CD8-positive, alpha-beta T cell (primary cell): ENCODE measurements at regions of chr7 and their contacts with region 1.

Region 1: DNA sequence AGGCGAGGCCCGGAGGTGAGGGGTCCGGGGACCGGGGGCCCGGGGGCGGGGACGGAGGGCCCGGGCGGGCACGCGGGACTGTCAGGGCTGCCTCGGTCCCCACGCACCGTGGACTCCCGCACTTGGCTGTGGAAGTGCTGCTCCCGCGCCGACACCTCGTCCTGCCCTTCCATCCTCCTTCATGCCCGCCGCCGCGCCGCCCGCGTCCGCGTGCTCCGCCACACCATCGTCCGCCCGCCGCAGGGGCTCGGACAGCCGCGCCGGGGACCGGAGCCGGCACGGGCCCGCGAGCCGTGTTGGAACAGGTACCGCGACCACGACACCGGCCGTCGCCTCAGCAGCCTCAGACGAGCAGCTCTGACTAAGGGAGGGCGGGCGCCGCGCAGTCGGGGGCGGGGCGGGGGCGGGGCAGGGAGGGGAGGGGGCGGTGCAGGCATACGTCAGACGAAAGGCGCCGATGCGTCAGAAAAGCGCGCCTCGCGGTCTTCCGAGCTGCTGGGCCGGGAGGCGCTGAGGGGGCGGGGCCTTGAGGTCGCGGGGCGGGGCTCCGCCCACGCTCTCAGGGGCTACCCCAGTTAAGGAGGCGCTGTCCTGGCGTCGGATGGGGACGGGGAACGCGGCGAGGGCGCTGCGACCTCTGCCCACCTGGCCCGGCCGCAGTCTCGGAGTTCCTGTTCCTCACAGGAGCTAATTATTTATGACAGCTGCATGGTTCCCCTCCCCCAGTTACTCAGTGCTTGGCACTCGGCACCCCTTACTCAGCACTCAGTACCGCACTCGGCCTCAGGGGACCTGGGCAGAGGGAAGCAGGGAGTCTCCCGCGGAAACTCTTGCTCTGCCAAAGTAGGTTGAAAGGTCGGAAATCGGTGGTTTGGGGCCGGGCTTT is at the start of gene LMBR1:
- DNase-seq: peak; percentile 89 to 97 (median 95)
- ATAC-seq: peak; percentile 79
- H3K4me3 ChIP-seq: peak within 1 kb of the TSS; percentile 81 to 91
- H3K4me3 Mint-ChIP-seq: peak within 1 kb of the TSS; percentile 91
- H3K27ac ChIP-seq: peak within 1 kb of the TSS; percentile 84 to 87
- H3K27ac Mint-ChIP-seq: peak within 1 kb of the TSS; percentile 92
- H3K4me1 ChIP-seq: peaks cover 18% of the 10 kb centered on the region
- H3K4me1 Mint-ChIP-seq: peaks cover 48% of the 10 kb centered on the region
- H3K27me3 ChIP-seq: no peaks in the 10 kb centered on the region
- H3K27me3 Mint-ChIP-seq: no peaks in the 10 kb centered on the region
- CTCF ChIP-seq: peak; percentile 60
- total RNA-seq, gene LMBR1: 69.1 to 74.0 TPM

Region 2: DNA sequence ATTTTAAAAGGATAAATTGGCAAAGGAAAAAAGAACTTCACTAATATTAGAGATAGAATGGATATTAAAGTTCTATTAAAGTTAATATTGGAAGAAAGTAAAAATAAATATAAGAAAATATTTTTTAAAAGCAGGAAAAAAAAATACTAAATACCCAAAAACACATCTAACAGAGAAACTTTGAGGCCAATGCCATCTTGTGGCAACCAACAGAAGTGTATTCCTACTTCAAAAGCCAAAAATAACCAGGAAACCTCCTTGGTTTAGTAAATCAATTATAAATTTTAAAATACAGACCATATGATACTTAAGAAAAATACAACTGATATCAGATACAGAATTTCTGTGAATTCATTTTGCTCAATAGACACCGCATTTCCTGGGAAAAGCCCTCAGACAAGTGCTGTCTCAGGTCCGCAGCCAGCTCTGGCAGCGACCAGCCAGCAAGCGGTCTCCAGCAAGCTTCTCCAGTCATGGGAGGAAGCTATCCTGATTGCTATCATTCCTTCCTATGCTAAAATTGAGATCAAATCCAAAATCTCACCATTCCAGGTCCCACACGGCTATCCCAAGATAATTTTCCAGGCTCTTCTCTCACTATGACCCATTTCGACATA is 65.4 kb before region 1 on chr7:
- CTCF ChIA-PET with region 1: no interaction called
- POLR2A ChIA-PET with region 1: no interaction called
- intact Hi-C with region 1: loop called (anchors 5 kb)
- DNase-seq: peak in 2 of 9 experiments; percentile 20 to 37
- ATAC-seq: no peak
- H3K4me3 ChIP-seq: no peak overlapping the region
- H3K4me3 Mint-ChIP-seq: no peak overlapping the region
- H3K27ac ChIP-seq: no peak overlapping the region
- H3K27ac Mint-ChIP-seq: no peak overlapping the region
- H3K4me1 ChIP-seq: no peaks in the 10 kb centered on the region
- H3K4me1 Mint-ChIP-seq: no peaks in the 10 kb centered on the region
- H3K27me3 ChIP-seq: no peaks in the 10 kb centered on the region
- H3K27me3 Mint-ChIP-seq: no peaks in the 10 kb centered on the region
- CTCF ChIP-seq: peak; percentile 68

Region 3: DNA sequence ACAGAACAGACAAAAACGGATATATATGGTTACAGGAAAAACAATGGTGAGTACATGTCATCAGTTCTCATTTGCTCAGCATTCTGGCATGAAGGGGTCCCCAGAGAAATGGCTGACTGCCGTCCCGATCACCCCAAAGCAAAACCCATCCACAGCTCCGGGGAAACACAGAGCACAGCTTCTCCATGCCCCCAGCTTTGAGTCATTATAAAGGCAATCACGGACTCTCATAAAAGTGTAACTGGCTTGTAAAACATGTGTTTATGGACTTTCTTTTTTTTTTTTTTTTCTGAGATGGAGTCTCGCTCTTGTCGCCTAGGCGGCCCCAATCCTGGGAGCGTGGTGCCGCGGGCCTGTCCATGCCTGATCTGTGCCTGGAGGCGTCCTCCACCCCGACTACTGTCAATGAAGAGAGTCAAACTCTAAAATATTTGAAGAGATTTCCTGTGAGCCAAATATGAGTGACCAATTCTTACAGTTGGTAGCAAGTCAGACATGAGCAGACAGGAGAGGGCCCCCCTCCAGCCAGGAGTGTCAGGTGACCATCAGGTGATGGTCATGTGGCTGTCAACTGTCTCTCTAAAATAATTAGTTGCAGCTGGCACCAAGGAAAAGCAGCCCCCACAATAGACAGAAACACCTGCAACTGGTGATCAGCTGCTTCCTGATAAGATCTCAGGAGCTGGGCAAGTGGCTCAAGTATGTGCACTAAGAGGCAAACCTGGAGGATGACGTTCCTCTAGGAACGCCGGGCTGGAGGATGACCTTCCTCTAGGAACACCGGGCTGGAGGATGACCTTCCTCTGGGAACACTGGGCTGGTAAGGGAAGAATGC is 34.7 kb after region 1 on chr7:
- CTCF ChIA-PET with region 1: no interaction called
- POLR2A ChIA-PET with region 1: interaction called, 4 read pairs
- intact Hi-C with region 1: loop called (anchors 1 kb)
- DNase-seq: no peak
- ATAC-seq: no peak
- H3K4me3 ChIP-seq: no peak overlapping the region
- H3K4me3 Mint-ChIP-seq: no peak overlapping the region
- H3K27ac ChIP-seq: no peak overlapping the region
- H3K27ac Mint-ChIP-seq: peak overlapping the region; percentile 23
- H3K4me1 ChIP-seq: peaks cover 17% of the 10 kb centered on the region
- H3K4me1 Mint-ChIP-seq: peaks cover 33% of the 10 kb centered on the region
- H3K27me3 ChIP-seq: no peaks in the 10 kb centered on the region
- H3K27me3 Mint-ChIP-seq: peaks cover 4% of the 10 kb centered on the region
- CTCF ChIP-seq: no peak

Region 4: GRCh38 chr7:157138424-157139110 is 245.5 kb after region 1 on chr7 and contains the start of gene UBE3C:
- CTCF ChIA-PET with region 1: no interaction called
- POLR2A ChIA-PET with region 1: interaction called, 4 read pairs
- intact Hi-C with region 1: loop called (anchors 1 to 2 kb)
- DNase-seq: peak; percentile 81 to 97 (median 89)
- ATAC-seq: peak; percentile 85
- H3K4me3 ChIP-seq: peak within 1 kb of the TSS; percentile 57 to 59
- H3K4me3 Mint-ChIP-seq: peak within 1 kb of the TSS; percentile 84
- H3K27ac ChIP-seq: peak within 1 kb of the TSS; percentile 76 to 88
- H3K27ac Mint-ChIP-seq: peak within 1 kb of the TSS; percentile 94
- H3K4me1 ChIP-seq: peaks cover 38% of the 10 kb centered on the region
- H3K4me1 Mint-ChIP-seq: peaks cover 41% of the 10 kb centered on the region
- H3K27me3 ChIP-seq: no peaks in the 10 kb centered on the region
- H3K27me3 Mint-ChIP-seq: no peaks in the 10 kb centered on the region
- CTCF ChIP-seq: no peak
- total RNA-seq, gene UBE3C: 25.3 to 28.8 TPM

Region 5: GRCh38 chr7:158549616-158550393 is 1656.7 kb after region 1 on chr7:
- CTCF ChIA-PET with region 1: no interaction called
- POLR2A ChIA-PET with region 1: no interaction called
- intact Hi-C with region 1: no loop called
- DNase-seq: no peak
- ATAC-seq: no peak
- H3K4me3 ChIP-seq: no peak overlapping the region
- H3K4me3 Mint-ChIP-seq: no peak overlapping the region
- H3K27ac ChIP-seq: no peak overlapping the region
- H3K27ac Mint-ChIP-seq: no peak overlapping the region
- H3K4me1 ChIP-seq: no peaks in the 10 kb centered on the region
- H3K4me1 Mint-ChIP-seq: no peaks in the 10 kb centered on the region
- H3K27me3 ChIP-seq: no peaks in the 10 kb centered on the region
- H3K27me3 Mint-ChIP-seq: no peaks in the 10 kb centered on the region
- CTCF ChIP-seq: no peak

Region 6: GRCh38 chr7:158704704-158705468 is 1811.8 kb after region 1 on chr7 and contains the start of gene NCAPG2:
- CTCF ChIA-PET with region 1: no interaction called
- POLR2A ChIA-PET with region 1: no interaction called
- intact Hi-C with region 1: loop called in 1 of 2 experiments (anchors 10 kb)
- DNase-seq: peak; percentile 95 to 99 (median 98)
- ATAC-seq: peak; percentile 99
- H3K4me3 ChIP-seq: peak within 1 kb of the TSS; percentile 68 to 86
- H3K4me3 Mint-ChIP-seq: peak within 1 kb of the TSS; percentile 89
- H3K27ac ChIP-seq: peak within 1 kb of the TSS; percentile 58 to 73
- H3K27ac Mint-ChIP-seq: peak within 1 kb of the TSS; percentile 83
- H3K4me1 ChIP-seq: peaks cover 5% of the 10 kb centered on the region
- H3K4me1 Mint-ChIP-seq: peaks cover 15% of the 10 kb centered on the region
- H3K27me3 ChIP-seq: no peaks in the 10 kb centered on the region
- H3K27me3 Mint-ChIP-seq: no peaks in the 10 kb centered on the region
- CTCF ChIP-seq: no peak
- total RNA-seq, gene NCAPG2: 3.2 to 4.5 TPM